Heart left ventricle (tissue), 16 donors: ENCODE measurements at regions of chr14 and their contacts with region 1.

Region 1: DNA sequence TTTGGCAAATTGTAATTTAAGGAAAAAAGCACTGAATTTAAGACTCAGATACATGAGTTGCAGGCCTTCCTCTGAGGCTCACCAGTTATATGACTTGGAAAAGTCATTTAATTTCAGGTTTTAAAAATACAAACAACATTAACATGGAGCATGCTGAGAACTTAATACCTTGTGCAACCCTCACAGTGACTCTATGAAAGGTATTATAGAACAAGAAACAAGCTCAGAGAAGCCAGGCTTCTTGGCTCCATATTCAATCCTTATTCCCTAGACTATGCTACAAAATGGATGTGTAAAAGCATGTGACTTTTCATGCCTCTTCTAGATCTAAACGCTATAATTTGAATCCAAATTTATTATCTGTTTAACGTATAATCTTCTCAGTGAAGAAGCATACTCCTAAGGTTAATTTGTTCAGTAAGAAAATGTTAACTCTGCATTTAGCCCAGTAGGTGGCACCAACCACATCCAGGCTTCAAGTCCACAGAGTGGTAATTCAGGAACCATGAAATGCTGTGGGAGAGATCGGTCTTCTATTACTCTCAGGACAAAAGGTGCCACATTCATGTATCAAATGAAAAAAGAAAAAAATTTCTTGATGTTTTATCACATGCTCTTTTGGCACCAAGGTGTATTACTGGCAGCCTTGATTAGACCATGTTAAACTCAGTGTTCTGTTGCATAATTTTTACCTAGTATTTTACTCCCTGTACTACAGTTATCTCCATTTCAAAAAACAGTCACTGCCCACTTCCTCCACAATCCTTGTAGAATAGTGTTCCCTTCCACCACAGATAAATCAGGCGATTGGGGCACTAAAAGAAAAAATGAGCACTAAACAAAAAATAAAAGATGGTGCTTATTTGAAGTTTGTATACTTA is 9.3 kb downstream of the CCDC196 start:
- DNase-seq: peak in 4 of 5 donors; percentile 30 to 39 (median 34)
- ATAC-seq: peak; percentile 66 to 95 (median 89)
- H3K4me3 ChIP-seq: peak overlapping the region in 5 of 12 donors; percentile 13 to 33 (median 28)
- H3K27ac ChIP-seq: no peak overlapping the region
- H3K4me1 ChIP-seq: peaks cover 0 to 20% (median 3%) of the 10 kb centered on the region in 12 donors
- H3K27me3 ChIP-seq: no peaks in the 10 kb centered on the region
- CTCF ChIP-seq: peak; percentile 65 to 90 (median 80)
- POLR2A ChIP-seq: no peak

Region 2: GRCh38 chr14:66568220-66568619 is 72.8 kb after region 1 on chr14:
- intact Hi-C with region 1: loop called in 2 of 10 experiments (anchors 10 kb)
- DNase-seq: no peak
- ATAC-seq: no peak
- H3K4me3 ChIP-seq: no peak overlapping the region
- H3K27ac ChIP-seq: no peak overlapping the region
- H3K4me1 ChIP-seq: peaks cover 0 to 21% (median 4%) of the 10 kb centered on the region in 12 donors
- H3K27me3 ChIP-seq: no peaks in the 10 kb centered on the region
- CTCF ChIP-seq: peak in 3 of 12 donors; percentile 23 to 30 (median 25)
- POLR2A ChIP-seq: no peak

Region 3: DNA sequence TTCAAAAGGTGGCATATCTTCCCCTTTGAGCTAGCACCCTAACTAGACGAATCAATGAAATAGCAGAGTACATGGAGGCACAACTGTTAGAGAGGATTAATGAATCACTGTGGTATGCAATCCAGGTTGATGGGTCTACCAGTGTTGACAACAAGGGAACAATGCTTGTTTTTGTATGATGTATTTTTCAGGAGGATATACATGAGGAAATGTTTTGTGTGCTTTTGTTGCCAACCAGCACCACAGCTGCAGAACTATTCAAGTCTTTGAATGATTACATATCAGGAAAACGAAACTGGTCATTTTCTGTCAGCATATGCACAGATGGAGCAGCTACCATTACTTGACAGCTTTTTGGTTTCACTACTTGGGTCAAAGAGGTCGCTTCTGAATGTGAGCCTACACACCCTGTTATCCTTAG is 155.0 kb after region 1 on chr14:
- intact Hi-C with region 1: loop called in 1 of 10 experiments (anchors 10 kb)
- DNase-seq: no peak
- ATAC-seq: peak in 2 of 4 donors; percentile 33 to 79
- H3K4me3 ChIP-seq: no peak overlapping the region
- H3K27ac ChIP-seq: peak overlapping the region in 9 of 12 donors; percentile 5 to 71 (median 52)
- H3K4me1 ChIP-seq: peaks cover 0 to 24% (median 11%) of the 10 kb centered on the region in 12 donors
- H3K27me3 ChIP-seq: no peaks in the 10 kb centered on the region
- CTCF ChIP-seq: no peak
- POLR2A ChIP-seq: no peak

Region 4: GRCh38 chr14:66716227-66716626 is 220.8 kb after region 1 on chr14:
- intact Hi-C with region 1: no loop called
- DNase-seq: no peak
- ATAC-seq: no peak
- H3K4me3 ChIP-seq: no peak overlapping the region
- H3K27ac ChIP-seq: no peak overlapping the region
- H3K4me1 ChIP-seq: peaks cover 0 to 7% (median 0%) of the 10 kb centered on the region in 12 donors
- H3K27me3 ChIP-seq: no peaks in the 10 kb centered on the region
- CTCF ChIP-seq: no peak
- POLR2A ChIP-seq: no peak

Region 5: GRCh38 chr14:66746316-66747006 is 251.0 kb after region 1 on chr14:
- intact Hi-C with region 1: loop called in 4 of 10 experiments (anchors 5 to 10 kb)
- DNase-seq: no peak
- ATAC-seq: peak in 3 of 4 donors; percentile 41 to 74 (median 48)
- H3K4me3 ChIP-seq: no peak overlapping the region
- H3K27ac ChIP-seq: no peak overlapping the region
- H3K4me1 ChIP-seq: peaks cover 0 to 23% (median 3%) of the 10 kb centered on the region in 12 donors
- H3K27me3 ChIP-seq: no peaks in the 10 kb centered on the region
- CTCF ChIP-seq: peak; percentile 40 to 66 (median 52)
- POLR2A ChIP-seq: no peak